ENCODE measurements at regions of chr1 and their contacts with region 1.

Region 1: DNA sequence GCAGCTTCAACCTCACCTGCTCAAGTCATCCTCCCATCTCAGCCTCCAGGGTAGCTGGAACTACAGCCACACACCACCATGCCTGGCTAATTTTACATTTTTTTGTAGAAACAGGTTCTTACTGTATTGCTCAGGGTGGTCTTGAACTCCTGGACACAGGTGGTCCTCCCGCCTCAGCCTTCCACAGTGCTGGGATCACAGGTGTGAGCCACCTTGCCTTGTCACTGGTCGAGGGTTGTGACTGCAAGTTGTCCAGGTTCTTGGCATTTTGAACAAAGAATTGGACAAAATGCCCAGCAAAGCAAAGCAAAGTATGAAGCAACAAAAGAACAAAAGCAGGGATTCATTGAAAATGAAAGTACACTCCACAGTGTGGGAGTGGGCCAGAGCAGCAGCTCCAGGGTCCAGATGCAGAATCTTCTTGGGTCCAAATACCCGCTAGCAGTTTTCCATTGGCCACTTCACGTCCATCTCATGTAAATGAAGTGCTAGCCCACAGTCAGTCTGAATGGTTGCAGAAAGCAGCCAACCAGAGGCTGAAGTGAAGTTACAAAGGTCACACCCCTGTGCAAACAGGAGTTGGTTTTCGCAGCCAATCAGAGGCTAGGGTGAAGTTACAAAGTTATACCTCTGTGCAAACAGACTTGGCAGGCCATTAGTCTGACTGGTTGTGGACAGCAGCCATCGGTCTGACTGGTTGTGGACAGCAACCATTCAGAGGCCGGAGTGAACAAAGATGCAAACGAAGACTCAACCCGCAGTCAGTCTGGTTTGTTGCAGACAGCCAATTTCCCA is 109.5 kb upstream of the KIF26B start:
- DNase-seq: no peak
- ATAC-seq: no peak
- H3K4me3 Mint-ChIP-seq: no peak overlapping the region
- H3K27ac Mint-ChIP-seq: no peak overlapping the region
- H3K4me1 Mint-ChIP-seq: no peaks in the 10 kb centered on the region
- H3K27me3 Mint-ChIP-seq: no peaks in the 10 kb centered on the region
- CTCF ChIP-seq: no peak

Region 2: DNA sequence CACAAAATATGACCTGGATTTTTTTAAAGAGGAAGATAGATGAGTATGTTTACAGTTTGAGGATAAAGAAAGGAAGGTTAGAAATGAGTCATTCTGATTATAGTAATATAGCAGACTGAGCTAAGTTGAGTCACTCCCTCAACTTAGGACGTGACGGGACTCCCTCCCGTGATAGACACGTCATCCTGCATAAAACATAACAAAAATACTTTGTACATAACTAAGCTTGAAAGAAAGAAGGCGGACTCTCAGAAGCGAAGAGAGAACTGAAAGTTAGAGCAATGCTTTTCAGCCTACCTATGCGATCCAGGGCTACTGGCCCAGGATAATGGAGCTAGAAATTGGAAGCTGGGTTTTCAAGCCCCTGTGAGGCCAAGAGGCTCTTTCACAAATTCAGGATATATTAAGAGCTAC is 445.3 kb before region 1 on chr1:
- CTCF ChIA-PET with region 1: interaction called, 48 read pairs
- POLR2A ChIA-PET with region 1: no interaction called
- intact Hi-C with region 1: loop called (anchors 1 kb)
- DNase-seq: no peak
- ATAC-seq: peak; percentile 91
- H3K4me3 Mint-ChIP-seq: no peak overlapping the region
- H3K27ac Mint-ChIP-seq: no peak overlapping the region
- H3K4me1 Mint-ChIP-seq: peaks cover 11% of the 10 kb centered on the region
- H3K27me3 Mint-ChIP-seq: no peaks in the 10 kb centered on the region
- CTCF ChIP-seq: no peak

Region 3: GRCh38 chr1:244815600-244816099 is 229.6 kb before region 1 on chr1:
- CTCF ChIA-PET with region 1: interaction called, 8 read pairs
- POLR2A ChIA-PET with region 1: interaction called, 3 read pairs
- intact Hi-C with region 1: loop called (anchors 1 kb)
- DNase-seq: no peak
- ATAC-seq: peak; percentile 56
- H3K4me3 Mint-ChIP-seq: peak overlapping the region; percentile 82
- H3K27ac Mint-ChIP-seq: peak overlapping the region; percentile 84
- H3K4me1 Mint-ChIP-seq: peaks cover 28% of the 10 kb centered on the region
- H3K27me3 Mint-ChIP-seq: no peaks in the 10 kb centered on the region
- CTCF ChIP-seq: no peak

Region 4: DNA sequence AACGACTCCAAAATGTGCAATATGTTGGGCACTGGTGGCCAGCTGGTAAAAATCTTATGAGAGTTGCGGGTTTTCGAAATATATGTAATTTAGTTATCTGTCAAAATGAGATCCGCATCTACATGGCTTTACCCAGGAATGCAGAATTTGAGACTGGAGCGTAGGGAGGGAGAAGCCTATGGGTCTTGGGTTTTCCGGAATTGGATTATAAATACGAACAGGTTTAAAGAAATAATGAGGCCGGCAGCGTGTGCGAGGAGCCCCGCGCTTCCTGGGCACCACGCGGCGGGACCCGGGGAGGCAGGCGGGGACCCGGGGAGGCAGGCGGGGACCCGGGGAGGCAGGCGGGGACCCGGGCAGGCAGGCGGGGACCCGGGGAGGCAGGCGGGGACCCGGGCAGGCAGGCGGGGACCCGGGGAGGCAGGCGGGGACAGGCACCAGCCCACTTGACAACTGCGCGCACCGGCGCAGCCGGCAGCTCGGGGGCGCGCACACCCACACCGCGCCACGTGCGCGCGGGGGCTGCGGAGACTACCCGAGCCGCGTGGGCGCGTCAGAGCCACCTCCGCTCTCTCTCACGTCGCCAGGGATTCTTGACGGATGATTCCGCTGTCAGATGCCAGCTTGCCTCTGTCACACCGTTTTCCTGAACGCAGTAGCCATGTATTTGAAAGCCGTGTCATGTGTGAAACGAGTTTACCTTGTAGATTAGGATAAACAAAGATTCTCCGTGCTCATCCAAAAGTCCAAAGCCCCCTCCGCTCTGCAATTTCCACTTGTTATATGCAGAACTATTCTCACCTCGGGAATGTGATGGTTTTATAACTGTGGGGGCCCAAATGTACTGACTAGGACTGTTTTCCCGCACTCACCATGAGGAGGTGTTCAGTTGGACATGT is 126.6 kb before region 1 on chr1:
- CTCF ChIA-PET with region 1: interaction called, 9 read pairs
- POLR2A ChIA-PET with region 1: no interaction called
- intact Hi-C with region 1: loop called (anchors 2 kb)
- DNase-seq: peak; percentile 61
- ATAC-seq: peak; percentile 83
- H3K4me3 Mint-ChIP-seq: peak overlapping the region; percentile 89
- H3K27ac Mint-ChIP-seq: peak overlapping the region; percentile 66
- H3K4me1 Mint-ChIP-seq: peaks cover 26% of the 10 kb centered on the region
- H3K27me3 Mint-ChIP-seq: no peaks in the 10 kb centered on the region
- CTCF ChIP-seq: no peak

Region 5: GRCh38 chr1:245000872-245001188 is 44.5 kb before region 1 on chr1:
- CTCF ChIA-PET with region 1: interaction called, 3 read pairs
- POLR2A ChIA-PET with region 1: no interaction called
- intact Hi-C with region 1: loop called (anchors 5 kb)
- DNase-seq: no peak
- ATAC-seq: peak; percentile 60
- H3K4me3 Mint-ChIP-seq: peak overlapping the region; percentile 50
- H3K27ac Mint-ChIP-seq: peak overlapping the region; percentile 55
- H3K4me1 Mint-ChIP-seq: peaks cover 16% of the 10 kb centered on the region
- H3K27me3 Mint-ChIP-seq: no peaks in the 10 kb centered on the region
- CTCF ChIP-seq: no peak

Measured in activated B cell treated with CpG ODN at 0.5 μM for 24 hours (primary cell).